ENCODE measurements at regions of chr6 and their contacts with region 1.

Region 1: GRCh38 chr6:26122793-26123674 is 35.8 kb downstream of the HFE start:
- DNase-seq: peak; percentile 100
- ATAC-seq: peak; percentile 71
- H3K4me3 ChIP-seq: peak overlapping the region; percentile 73 to 99 (median 83)
- H3K27ac ChIP-seq: peak overlapping the region; percentile 93
- H3K4me1 ChIP-seq: peaks cover 61% of the 10 kb centered on the region
- H3K27me3 ChIP-seq: no peaks in the 10 kb centered on the region; a peak in 2 of 5 replicates
- CTCF ChIP-seq: no peak
- EP300 ChIP-seq: peak; percentile 23 to 94; a peak in 2 of 4 replicates
- POLR2A ChIP-seq: peak; percentile 87 to 98
- RAD21 ChIP-seq: peak; percentile 49

Region 2: DNA sequence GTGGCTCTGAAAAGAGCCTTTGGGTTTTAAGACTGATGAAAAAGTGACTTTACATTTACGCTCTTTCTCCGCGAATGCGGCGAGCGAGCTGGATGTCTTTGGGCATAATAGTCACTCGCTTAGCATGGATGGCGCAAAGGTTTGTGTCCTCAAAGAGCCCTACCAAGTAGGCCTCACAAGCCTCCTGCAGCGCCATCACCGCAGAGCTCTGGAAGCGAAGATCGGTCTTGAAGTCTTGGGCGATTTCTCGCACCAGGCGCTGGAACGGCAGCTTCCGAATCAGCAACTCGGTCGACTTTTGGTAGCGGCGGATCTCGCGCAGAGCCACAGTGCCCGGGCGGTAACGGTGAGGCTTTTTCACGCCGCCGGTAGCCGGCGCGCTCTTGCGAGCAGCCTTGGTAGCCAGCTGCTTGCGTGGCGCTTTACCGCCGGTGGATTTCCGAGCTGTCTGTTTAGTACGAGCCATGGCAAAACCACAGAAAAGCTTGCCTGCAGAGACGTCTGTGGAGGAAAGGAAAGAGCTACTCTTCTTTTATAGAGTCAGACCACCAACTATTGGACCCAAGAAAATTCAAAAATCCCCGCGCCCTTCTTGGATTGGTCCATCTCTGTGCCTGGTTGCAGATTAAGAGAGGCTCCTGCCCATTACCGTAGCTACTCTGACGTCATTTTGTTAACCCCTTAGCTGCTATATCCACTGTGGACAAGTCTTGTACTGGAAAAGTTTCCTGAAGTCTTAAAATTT is 91.3 kb before region 1 on chr6:
- CTCF ChIA-PET with region 1: no interaction called
- POLR2A ChIA-PET with region 1: interaction called, 84 read pairs
- in situ Hi-C with region 1: no loop called
- intact Hi-C with region 1: no loop called
- DNase-seq: peak; percentile 100
- ATAC-seq: peak; percentile 79
- H3K4me3 ChIP-seq: peak overlapping the region; percentile 71 to 83 (median 82)
- H3K27ac ChIP-seq: peak overlapping the region; percentile 93
- H3K4me1 ChIP-seq: peaks cover 37% of the 10 kb centered on the region
- H3K27me3 ChIP-seq: no peaks in the 10 kb centered on the region; a peak in 1 of 5 replicates
- CTCF ChIP-seq: peak; percentile 52
- EP300 ChIP-seq: peak; percentile 40 to 80; a peak in 2 of 4 replicates
- POLR2A ChIP-seq: peak; percentile 99
- RAD21 ChIP-seq: peak; percentile 61

Region 3: GRCh38 chr6:26087284-26088115 is 35.5 kb before region 1 on chr6 and contains the start of gene HFE:
- CTCF ChIA-PET with region 1: no interaction called
- POLR2A ChIA-PET with region 1: interaction called, 23 read pairs
- in situ Hi-C with region 1: no loop called
- intact Hi-C with region 1: no loop called
- DNase-seq: peak; percentile 55
- ATAC-seq: peak; percentile 86
- H3K4me3 ChIP-seq: peak within 1 kb of the TSS; percentile 79 to 84 (median 84)
- H3K27ac ChIP-seq: peak within 1 kb of the TSS; percentile 72
- H3K4me1 ChIP-seq: peaks cover 31% of the 10 kb centered on the region
- H3K27me3 ChIP-seq: no peaks in the 10 kb centered on the region
- CTCF ChIP-seq: peak; percentile 24; the same call in 1 of the 2 replicates
- EP300 ChIP-seq: no peak
- POLR2A ChIP-seq: peak; percentile 20 to 55; a peak in 2 of 4 replicates
- RAD21 ChIP-seq: peak; percentile 9; the same call in 1 of the 2 replicates
- total RNA-seq, gene HFE: 1.9 and 3.7 TPM in 2 replicates

Region 4: DNA sequence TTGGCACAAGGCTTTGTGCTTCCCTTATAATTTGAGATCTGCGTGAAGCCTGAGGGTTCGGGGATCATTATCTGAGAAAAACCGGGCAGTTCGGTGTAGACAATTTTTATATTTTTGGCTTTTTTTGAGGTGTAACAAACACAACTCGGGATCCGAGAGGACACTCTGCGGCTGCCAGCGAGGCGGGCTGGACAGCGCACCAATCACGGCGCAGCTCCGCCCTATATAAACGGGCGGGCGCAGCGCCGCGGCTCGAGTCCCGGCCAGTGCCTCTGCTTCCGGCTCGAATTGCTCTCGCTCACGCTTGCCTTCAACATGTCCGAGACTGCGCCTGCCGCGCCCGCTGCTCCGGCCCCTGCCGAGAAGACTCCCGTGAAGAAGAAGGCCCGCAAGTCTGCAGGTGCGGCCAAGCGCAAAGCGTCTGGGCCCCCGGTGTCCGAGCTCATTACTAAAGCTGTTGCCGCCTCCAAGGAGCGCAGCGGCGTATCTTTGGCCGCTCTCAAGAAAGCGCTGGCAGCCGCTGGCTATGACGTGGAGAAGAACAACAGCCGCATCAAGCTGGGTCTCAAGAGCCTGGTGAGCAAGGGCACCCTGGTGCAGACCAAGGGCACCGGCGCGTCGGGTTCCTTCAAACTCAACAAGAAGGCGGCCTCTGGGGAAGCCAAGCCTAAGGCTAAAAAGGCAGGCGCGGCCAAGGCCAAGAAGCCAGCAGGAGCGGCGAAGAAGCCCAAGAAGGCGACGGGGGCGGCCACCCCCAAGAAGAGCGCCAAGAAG is 33.2 kb after region 1 on chr6:
- CTCF ChIA-PET with region 1: no interaction called
- POLR2A ChIA-PET with region 1: interaction called, 621 read pairs
- in situ Hi-C with region 1: loop called (anchors 5 kb)
- intact Hi-C with region 1: loop called (anchors 1 kb)
- DNase-seq: peak; percentile 88
- ATAC-seq: peak; percentile 77
- H3K4me3 ChIP-seq: peak overlapping the region; percentile 94 to 96 (median 95)
- H3K27ac ChIP-seq: peak overlapping the region; percentile 95
- H3K4me1 ChIP-seq: peaks cover 40% of the 10 kb centered on the region
- H3K27me3 ChIP-seq: no peaks in the 10 kb centered on the region; a peak in 1 of 5 replicates
- CTCF ChIP-seq: peak; percentile 37
- EP300 ChIP-seq: peak; percentile 7 to 60; a peak in 1 of 4 replicates
- POLR2A ChIP-seq: peak; percentile 99
- RAD21 ChIP-seq: peak; percentile 69

Region 5: DNA sequence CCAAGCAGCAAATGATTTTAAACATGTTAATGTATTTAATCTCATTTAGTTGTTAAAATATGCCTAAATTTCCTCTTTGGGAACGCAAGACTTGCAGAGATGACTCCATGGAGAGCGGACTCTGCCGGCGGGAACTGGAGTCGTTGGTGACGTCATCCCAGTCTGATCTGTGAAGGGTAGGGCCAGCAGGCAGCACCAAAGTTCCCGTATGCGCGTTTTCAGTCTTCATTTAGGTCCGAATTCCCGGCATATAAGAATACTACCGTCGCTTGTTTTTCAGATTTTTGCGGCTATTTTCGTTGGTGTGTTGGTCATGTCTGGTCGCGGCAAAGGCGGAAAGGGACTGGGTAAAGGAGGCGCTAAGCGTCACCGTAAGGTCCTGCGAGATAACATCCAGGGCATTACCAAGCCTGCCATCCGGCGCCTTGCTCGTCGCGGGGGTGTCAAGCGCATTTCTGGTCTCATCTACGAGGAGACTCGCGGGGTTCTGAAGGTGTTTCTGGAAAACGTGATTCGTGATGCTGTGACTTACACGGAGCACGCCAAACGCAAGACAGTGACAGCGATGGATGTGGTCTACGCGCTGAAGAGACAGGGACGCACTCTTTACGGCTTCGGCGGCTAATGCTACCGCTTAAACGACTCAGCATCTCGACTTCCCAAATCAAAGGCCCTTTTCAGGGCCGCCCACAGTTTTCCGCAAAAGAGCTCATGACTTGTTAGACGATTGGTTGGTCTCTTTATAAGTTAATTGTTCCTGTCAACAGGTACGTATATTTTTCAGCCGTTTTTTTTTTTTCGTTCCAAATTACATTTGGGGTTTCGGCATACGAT is 81.5 kb after region 1 on chr6:
- CTCF ChIA-PET with region 1: no interaction called
- POLR2A ChIA-PET with region 1: interaction called, 272 read pairs
- in situ Hi-C with region 1: loop called (anchors 5 kb)
- intact Hi-C with region 1: loop called (anchors 2 kb)
- DNase-seq: peak; percentile 98
- ATAC-seq: peak; percentile 75
- H3K4me3 ChIP-seq: peak overlapping the region; percentile 62 to 95 (median 77)
- H3K27ac ChIP-seq: peak overlapping the region; percentile 87
- H3K4me1 ChIP-seq: peaks cover 36% of the 10 kb centered on the region
- H3K27me3 ChIP-seq: no peaks in the 10 kb centered on the region; a peak in 1 of 5 replicates
- CTCF ChIP-seq: peak; percentile 53
- EP300 ChIP-seq: peak in 1 of 2 experiments; percentile 89; a peak in 3 of 4 replicates
- POLR2A ChIP-seq: peak; percentile 98 to 99
- RAD21 ChIP-seq: no peak; the same call in 1 of the 2 replicates

Region 6: DNA sequence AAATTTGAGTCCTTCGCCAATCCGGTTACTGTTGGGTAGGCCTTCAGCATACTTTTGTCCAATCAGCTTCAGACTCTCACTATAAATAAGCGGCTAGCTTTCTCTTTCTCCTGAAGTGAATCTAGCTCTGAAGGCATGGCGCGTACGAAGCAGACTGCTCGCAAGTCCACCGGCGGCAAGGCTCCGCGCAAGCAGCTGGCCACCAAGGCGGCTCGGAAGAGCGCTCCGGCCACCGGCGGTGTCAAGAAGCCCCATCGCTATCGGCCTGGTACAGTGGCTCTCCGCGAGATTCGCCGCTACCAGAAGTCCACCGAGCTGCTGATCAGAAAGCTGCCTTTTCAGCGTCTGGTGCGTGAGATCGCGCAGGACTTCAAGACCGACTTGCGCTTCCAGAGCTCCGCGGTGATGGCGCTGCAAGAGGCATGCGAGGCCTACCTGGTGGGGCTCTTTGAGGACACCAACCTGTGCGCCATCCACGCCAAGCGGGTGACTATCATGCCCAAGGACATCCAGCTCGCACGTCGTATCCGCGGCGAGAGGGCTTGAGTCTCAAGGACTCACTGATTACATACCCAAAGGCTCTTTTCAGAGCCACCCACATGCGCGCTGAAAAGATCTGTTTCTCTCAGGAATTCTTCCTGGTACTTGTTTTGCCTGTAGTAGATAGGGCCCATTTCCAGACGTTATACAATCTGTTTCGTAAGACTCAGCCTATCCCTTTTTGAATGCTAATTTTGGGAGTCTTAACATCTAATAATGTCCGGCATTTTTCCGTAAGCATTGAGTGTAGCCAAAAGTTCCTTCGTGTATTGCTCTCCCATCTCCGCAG is 1687.1 kb after region 1 on chr6:
- CTCF ChIA-PET with region 1: no interaction called
- POLR2A ChIA-PET with region 1: interaction called, 10 read pairs
- in situ Hi-C with region 1: no loop called
- intact Hi-C with region 1: no loop called
- DNase-seq: peak; percentile 98
- ATAC-seq: peak; percentile 57
- H3K4me3 ChIP-seq: peak overlapping the region; percentile 76 to 84 (median 79)
- H3K27ac ChIP-seq: peak overlapping the region; percentile 89
- H3K4me1 ChIP-seq: peaks cover 54% of the 10 kb centered on the region
- H3K27me3 ChIP-seq: no peaks in the 10 kb centered on the region; a peak in 1 of 5 replicates
- CTCF ChIP-seq: peak; percentile 65
- EP300 ChIP-seq: peak in 1 of 2 experiments; percentile 33; a peak in 1 of 4 replicates
- POLR2A ChIP-seq: peak; percentile 99 to 100
- RAD21 ChIP-seq: peak; percentile 58